CD8-positive, alpha-beta memory T cell (primary cell): ENCODE measurements at regions of chr12 and their contacts with region 1.

Region 1: DNA sequence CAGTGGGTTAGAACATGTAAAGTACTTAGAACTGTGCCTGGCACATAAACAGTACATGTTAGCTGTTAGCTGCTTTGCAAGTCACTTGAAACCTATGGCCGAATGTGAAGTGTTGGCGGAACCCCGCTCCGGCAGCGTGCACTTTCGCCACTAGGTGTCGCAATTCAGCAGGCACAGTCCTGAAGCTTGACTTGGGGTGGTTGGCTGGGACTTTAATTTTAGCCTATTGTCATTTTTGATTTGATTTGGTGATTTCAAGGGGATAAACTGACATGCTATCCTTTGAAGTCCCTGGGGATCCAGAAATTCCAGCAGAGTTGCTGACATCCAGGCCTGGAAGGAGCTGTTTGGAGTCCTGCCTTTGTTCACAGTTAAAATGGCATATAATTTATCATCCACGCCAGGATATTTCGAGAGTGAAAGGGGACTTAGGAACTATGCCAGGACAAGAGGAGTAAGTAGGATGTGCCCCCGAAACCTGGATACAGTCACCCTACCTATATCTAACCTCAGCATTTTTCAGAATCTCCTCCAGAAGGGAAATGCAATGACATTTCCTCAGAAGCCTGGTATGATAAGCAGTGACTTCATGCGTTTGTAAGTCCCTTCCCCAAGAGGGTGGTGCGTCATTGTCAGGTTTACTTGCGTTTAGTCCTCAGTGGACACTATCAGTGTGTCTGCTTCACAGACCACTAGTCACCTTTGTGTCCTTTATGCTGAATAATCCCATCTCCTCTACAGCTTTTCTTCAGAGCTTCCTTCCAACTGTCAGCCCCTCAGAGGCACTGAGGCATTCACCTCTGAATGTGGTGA is 3.5 kb upstream of the TSPAN9 start:
- DNase-seq: peak; percentile 67 to 83 (median 70)
- H3K4me3 ChIP-seq: no peak overlapping the region
- H3K4me3 Mint-ChIP-seq: peak overlapping the region in 2 of 7 donors; percentile 59 to 85
- H3K27ac ChIP-seq: no peak overlapping the region
- H3K27ac Mint-ChIP-seq: no peak overlapping the region
- H3K4me1 ChIP-seq: peaks cover 5% of the 10 kb centered on the region
- H3K4me1 Mint-ChIP-seq: peaks cover 10 to 28% (median 13%) of the 10 kb centered on the region in 3 donors
- H3K27me3 ChIP-seq: peaks cover 5% of the 10 kb centered on the region
- H3K27me3 Mint-ChIP-seq: peaks cover 9 to 17% of the 10 kb centered on the region in 2 donors

Region 2: GRCh38 chr12:2976581-2976996 is 97.1 kb before region 1 on chr12:
- CTCF ChIA-PET with region 1: no interaction called
- POLR2A ChIA-PET with region 1: no interaction called
- DNase-seq: peak in 1 of 5 donors; percentile 30
- H3K4me3 ChIP-seq: no peak overlapping the region
- H3K4me3 Mint-ChIP-seq: no peak overlapping the region
- H3K27ac ChIP-seq: no peak overlapping the region
- H3K27ac Mint-ChIP-seq: no peak overlapping the region
- H3K4me1 ChIP-seq: no peaks in the 10 kb centered on the region
- H3K4me1 Mint-ChIP-seq: no peaks in the 10 kb centered on the region
- H3K27me3 ChIP-seq: no peaks in the 10 kb centered on the region
- H3K27me3 Mint-ChIP-seq: peaks cover 0 to 11% of the 10 kb centered on the region in 2 donors

Region 3: DNA sequence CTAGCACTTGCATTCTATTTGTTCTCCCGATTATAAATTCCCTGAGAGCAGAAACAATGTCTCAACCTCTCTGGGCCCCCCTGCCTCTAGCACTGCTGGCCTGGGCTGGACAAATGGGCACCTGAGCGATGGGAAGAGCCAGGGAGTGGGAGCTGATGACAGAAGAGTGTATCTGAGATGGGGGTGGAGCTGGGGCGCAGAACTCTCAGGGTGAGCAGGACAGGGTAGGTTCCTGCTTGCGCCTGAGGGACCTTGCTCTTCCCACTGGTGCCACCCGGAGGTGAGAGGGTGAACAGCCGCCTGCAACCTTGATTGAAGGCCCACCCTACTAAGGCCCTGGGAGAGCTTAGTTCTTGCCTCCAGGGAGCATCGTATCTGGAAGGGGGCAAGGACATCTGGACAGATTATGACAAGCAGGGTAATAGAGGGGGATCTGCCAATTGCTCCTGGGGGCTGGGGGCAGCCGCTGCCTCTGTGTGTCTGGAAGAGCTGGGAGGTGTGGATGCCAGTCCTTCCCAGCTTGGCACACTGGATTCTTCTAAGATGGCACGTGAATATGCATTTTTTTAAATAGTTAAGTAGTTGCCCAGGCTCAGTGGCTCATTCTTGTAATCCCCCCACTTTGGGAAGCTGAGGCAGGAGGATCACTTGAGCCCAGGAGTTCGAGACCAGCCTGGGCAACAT is 39.4 kb before region 1 on chr12:
- CTCF ChIA-PET with region 1: no interaction called
- POLR2A ChIA-PET with region 1: no interaction called
- DNase-seq: no peak
- H3K4me3 ChIP-seq: no peak overlapping the region
- H3K4me3 Mint-ChIP-seq: no peak overlapping the region
- H3K27ac ChIP-seq: no peak overlapping the region
- H3K27ac Mint-ChIP-seq: no peak overlapping the region
- H3K4me1 ChIP-seq: no peaks in the 10 kb centered on the region
- H3K4me1 Mint-ChIP-seq: no peaks in the 10 kb centered on the region
- H3K27me3 ChIP-seq: no peaks in the 10 kb centered on the region
- H3K27me3 Mint-ChIP-seq: peaks cover 18% of the 10 kb centered on the region in 2 donors

Region 4: GRCh38 chr12:3060778-3061458 is 12.7 kb before region 1 on chr12:
- CTCF ChIA-PET with region 1: interaction called, 10 read pairs
- POLR2A ChIA-PET with region 1: no interaction called
- DNase-seq: no peak
- H3K4me3 ChIP-seq: no peak overlapping the region
- H3K4me3 Mint-ChIP-seq: no peak overlapping the region
- H3K27ac ChIP-seq: no peak overlapping the region
- H3K27ac Mint-ChIP-seq: no peak overlapping the region
- H3K4me1 ChIP-seq: no peaks in the 10 kb centered on the region
- H3K4me1 Mint-ChIP-seq: no peaks in the 10 kb centered on the region
- H3K27me3 ChIP-seq: no peaks in the 10 kb centered on the region
- H3K27me3 Mint-ChIP-seq: peaks cover 21 to 61% of the 10 kb centered on the region in 2 donors

Region 5: DNA sequence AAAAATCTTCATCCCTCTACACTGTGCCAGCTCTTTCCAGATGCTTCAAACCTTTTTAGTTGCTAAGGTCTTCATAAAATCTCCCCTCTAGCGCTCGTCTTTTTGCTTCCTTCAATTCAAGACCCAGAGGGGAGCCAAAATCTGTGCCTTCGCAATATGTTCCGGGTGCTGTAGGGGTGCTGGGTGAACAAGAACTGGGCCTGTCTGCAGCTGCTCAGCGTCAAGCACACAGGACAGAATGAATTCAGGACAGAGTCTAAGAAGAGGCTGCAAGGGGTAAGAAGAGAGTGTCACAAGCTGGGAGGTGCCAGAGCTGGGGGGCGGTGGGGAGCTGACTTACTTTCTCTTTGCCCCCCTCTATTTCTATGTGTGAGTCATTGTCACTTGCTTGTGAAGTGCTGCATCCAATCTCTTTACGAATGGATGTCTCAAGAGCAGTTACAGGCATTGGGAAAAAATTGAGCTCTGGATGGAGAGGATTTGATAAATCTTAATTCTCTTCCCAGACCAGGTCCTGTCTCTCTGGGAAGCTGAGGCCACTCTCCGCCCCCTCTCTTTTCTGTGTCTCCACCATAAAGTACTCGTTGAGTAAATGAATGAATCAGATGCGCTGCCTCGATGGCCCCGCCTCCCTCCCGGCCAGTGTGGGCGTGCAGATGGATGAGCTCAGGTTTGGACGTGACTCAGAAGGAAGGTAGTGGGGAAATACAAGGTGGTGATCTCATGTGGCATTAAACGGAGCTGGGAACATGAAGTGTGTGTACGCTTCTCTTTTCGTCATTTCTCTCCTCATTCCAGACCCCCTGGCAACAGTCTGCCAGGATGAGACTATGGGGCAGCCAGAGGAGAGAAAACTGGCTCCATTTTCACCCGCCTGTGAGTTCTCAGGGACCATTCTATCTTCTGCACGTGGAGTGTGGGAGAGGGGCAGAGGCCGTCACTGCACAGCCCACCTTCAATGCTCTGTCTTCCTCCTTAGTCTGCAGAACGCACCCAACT is 94.9 kb after region 1 on chr12:
- CTCF ChIA-PET with region 1: no interaction called
- POLR2A ChIA-PET with region 1: no interaction called
- DNase-seq: no peak
- H3K4me3 ChIP-seq: no peak overlapping the region
- H3K4me3 Mint-ChIP-seq: no peak overlapping the region
- H3K27ac ChIP-seq: no peak overlapping the region
- H3K27ac Mint-ChIP-seq: no peak overlapping the region
- H3K4me1 ChIP-seq: no peaks in the 10 kb centered on the region
- H3K4me1 Mint-ChIP-seq: peaks cover 0 to 4% (median 2%) of the 10 kb centered on the region in 3 donors
- H3K27me3 ChIP-seq: no peaks in the 10 kb centered on the region
- H3K27me3 Mint-ChIP-seq: peaks cover 5 to 18% of the 10 kb centered on the region in 2 donors

Region 6: GRCh38 chr12:3275171-3276041 is 201.8 kb after region 1 on chr12:
- CTCF ChIA-PET with region 1: interaction called, 52 read pairs
- POLR2A ChIA-PET with region 1: no interaction called
- DNase-seq: peak; percentile 42 to 71 (median 47)
- H3K4me3 ChIP-seq: no peak overlapping the region
- H3K4me3 Mint-ChIP-seq: peak overlapping the region in 3 of 7 donors; percentile 11 to 34 (median 23)
- H3K27ac ChIP-seq: no peak overlapping the region
- H3K27ac Mint-ChIP-seq: no peak overlapping the region
- H3K4me1 ChIP-seq: no peaks in the 10 kb centered on the region
- H3K4me1 Mint-ChIP-seq: peaks cover 0 to 6% (median 0%) of the 10 kb centered on the region in 3 donors
- H3K27me3 ChIP-seq: no peaks in the 10 kb centered on the region
- H3K27me3 Mint-ChIP-seq: peaks cover 10 to 44% of the 10 kb centered on the region in 2 donors